Activated CD4-positive, alpha-beta T cell treated with anti-CD3 and anti-CD28 coated beads for 36 hours (primary cell): ENCODE measurements at regions of chr9 and their contacts with region 1.

Region 1: DNA sequence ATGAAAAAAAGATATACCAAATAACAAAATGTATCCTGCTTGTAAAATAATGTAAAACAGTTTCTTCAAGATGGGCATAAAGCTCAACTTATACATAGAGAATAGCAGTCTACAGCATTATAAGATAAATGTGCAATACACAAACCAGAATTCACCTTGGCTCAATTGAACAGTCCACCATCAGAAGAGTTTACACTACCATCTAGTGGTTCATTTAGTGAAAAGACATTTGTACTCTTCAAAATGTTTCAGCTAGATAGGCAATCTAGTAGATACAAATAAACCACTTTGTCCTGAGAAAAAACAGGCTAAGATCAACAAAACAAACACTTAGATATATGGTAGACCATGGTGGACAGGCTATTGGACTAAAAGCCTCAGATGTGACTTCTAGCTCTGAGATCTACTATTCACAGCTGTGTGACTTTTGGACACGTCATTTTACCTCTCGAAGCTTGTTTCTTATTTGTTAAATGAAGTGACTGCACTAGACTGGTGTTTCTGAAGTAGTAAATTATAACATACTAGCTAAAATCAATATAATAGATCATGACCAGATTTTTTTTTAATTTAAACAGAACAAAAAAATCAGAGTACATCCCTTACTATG is 22.1 kb upstream of the TPD52L3 start:
- DNase-seq: no peak
- ATAC-seq: no peak
- H3K4me3 Mint-ChIP-seq: no peak overlapping the region
- H3K27ac Mint-ChIP-seq: no peak overlapping the region
- H3K4me1 Mint-ChIP-seq: no peaks in the 10 kb centered on the region
- H3K27me3 Mint-ChIP-seq: peaks cover 13% of the 10 kb centered on the region

Region 2: GRCh38 chr9:5886114-5886939 is 419.7 kb before region 1 on chr9:
- CTCF ChIA-PET with region 1: interaction called, 12 read pairs
- POLR2A ChIA-PET with region 1: no interaction called
- intact Hi-C with region 1: loop called (anchors 1 to 5 kb)
- DNase-seq: peak; percentile 92
- ATAC-seq: peak; percentile 100
- H3K4me3 Mint-ChIP-seq: no peak overlapping the region
- H3K27ac Mint-ChIP-seq: no peak overlapping the region
- H3K4me1 Mint-ChIP-seq: peaks cover 5% of the 10 kb centered on the region
- H3K27me3 Mint-ChIP-seq: no peaks in the 10 kb centered on the region

Region 3: DNA sequence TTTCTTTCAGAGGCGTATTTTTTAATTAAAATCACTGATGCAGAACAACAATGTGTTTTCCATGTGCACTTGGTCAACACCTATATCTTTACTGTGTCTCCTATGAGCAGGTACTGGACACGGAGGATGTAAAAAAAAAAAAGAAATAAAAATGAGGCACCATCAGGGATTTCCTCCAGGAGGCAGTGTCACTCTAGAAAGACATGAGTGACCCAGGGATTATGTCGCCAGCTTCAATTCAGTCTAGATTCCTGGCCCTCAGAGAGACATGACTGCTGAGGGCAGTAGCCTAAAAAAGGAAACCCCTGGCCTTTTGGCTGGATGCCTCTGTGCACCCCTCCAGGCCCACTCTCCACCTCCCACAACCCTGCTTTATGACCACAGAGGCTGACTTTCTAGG is 108.7 kb before region 1 on chr9:
- CTCF ChIA-PET with region 1: interaction called, 3 read pairs
- POLR2A ChIA-PET with region 1: no interaction called
- intact Hi-C with region 1: loop called (anchors 1 to 10 kb)
- DNase-seq: no peak
- ATAC-seq: no peak
- H3K4me3 Mint-ChIP-seq: no peak overlapping the region
- H3K27ac Mint-ChIP-seq: no peak overlapping the region
- H3K4me1 Mint-ChIP-seq: no peaks in the 10 kb centered on the region
- H3K27me3 Mint-ChIP-seq: peaks cover 18% of the 10 kb centered on the region